ENCODE measurements at regions of chr20 and their contacts with region 1.

Region 1: DNA sequence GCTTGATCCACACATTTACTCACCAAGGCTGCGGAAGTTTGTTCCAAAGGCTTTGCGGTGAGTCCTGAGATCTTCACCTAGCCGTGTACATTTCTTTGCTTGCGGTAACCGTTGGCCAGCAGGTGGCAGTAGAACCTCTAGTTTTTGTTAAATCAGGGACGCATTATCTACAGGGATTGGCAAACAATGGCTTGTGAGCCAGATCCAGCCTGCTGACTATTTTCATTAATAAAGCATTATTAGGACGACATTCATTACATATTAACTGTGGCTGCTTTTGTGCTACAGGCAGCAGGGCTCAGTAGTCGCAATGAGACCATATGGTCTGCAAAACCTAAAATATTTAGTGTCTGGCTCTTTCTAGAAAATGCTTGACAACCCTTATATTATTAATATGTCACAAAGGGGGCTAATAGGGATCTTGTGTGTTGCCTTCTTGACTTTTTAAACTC is 174.1 kb downstream of the DOK5 start:
- DNase-seq: peak; percentile 53
- ATAC-seq: peak; percentile 94
- H3K4me3 ChIP-seq: no peak overlapping the region
- H3K27ac ChIP-seq: no peak overlapping the region
- H3K4me1 ChIP-seq: no peaks in the 10 kb centered on the region
- H3K27me3 ChIP-seq: peaks cover 8% of the 10 kb centered on the region; the same call in 1 of the 2 replicates
- CTCF ChIP-seq: peak; percentile 88

Region 2: GRCh38 chr20:54097236-54097529 is 552.4 kb before region 1 on chr20:
- CTCF ChIA-PET with region 1: interaction called, 5 read pairs
- POLR2A ChIA-PET with region 1: no interaction called
- in situ Hi-C with region 1: no loop called
- intact Hi-C with region 1: loop called (anchors 2 kb)
- DNase-seq: no peak
- ATAC-seq: peak; percentile 35; the same call in 1 of the 2 replicates
- H3K4me3 ChIP-seq: no peak overlapping the region
- H3K27ac ChIP-seq: peak overlapping the region; percentile 44; the same call in 1 of the 2 replicates
- H3K4me1 ChIP-seq: peaks cover 17% of the 10 kb centered on the region
- H3K27me3 ChIP-seq: no peaks in the 10 kb centered on the region
- CTCF ChIP-seq: no peak

Region 3: GRCh38 chr20:54219751-54220426 is 429.6 kb before region 1 on chr20:
- CTCF ChIA-PET with region 1: no interaction called
- POLR2A ChIA-PET with region 1: no interaction called
- in situ Hi-C with region 1: no loop called
- intact Hi-C with region 1: loop called (anchors 2 kb)
- DNase-seq: no peak
- ATAC-seq: no peak
- H3K4me3 ChIP-seq: no peak overlapping the region
- H3K27ac ChIP-seq: no peak overlapping the region
- H3K4me1 ChIP-seq: 0 out of 2 replicates have a peak, but pooled peaks cover 3% of the 10 kb centered on the region
- H3K27me3 ChIP-seq: no peaks in the 10 kb centered on the region
- CTCF ChIP-seq: peak; percentile 70; the same call in 1 of the 2 replicates

Region 4: GRCh38 chr20:54234991-54235658 is 414.4 kb before region 1 on chr20:
- CTCF ChIA-PET with region 1: interaction called, 12 read pairs
- POLR2A ChIA-PET with region 1: no interaction called
- in situ Hi-C with region 1: no loop called
- intact Hi-C with region 1: no loop called
- DNase-seq: no peak
- ATAC-seq: no peak
- H3K4me3 ChIP-seq: no peak overlapping the region
- H3K27ac ChIP-seq: no peak overlapping the region
- H3K4me1 ChIP-seq: no peaks in the 10 kb centered on the region
- H3K27me3 ChIP-seq: peaks cover 13% of the 10 kb centered on the region
- CTCF ChIP-seq: no peak

Measured in Panc1 (cell line).